ENCODE measurements at regions of chr21 and their contacts with region 1.

Region 1: GRCh38 chr21:44949779-44950198 is 10.0 kb downstream of the SLX9 start:
- DNase-seq: peak; percentile 97
- ATAC-seq: peak; percentile 94
- H3K4me3 Mint-ChIP-seq: no peak overlapping the region
- H3K27ac Mint-ChIP-seq: peak overlapping the region; percentile 45; the same call in 1 of the 2 replicates
- H3K4me1 Mint-ChIP-seq: 0 out of 2 replicates have a peak, but pooled peaks cover 2% of the 10 kb centered on the region
- H3K27me3 Mint-ChIP-seq: no peaks in the 10 kb centered on the region
- CTCF ChIP-seq: peak; percentile 88

Region 2: DNA sequence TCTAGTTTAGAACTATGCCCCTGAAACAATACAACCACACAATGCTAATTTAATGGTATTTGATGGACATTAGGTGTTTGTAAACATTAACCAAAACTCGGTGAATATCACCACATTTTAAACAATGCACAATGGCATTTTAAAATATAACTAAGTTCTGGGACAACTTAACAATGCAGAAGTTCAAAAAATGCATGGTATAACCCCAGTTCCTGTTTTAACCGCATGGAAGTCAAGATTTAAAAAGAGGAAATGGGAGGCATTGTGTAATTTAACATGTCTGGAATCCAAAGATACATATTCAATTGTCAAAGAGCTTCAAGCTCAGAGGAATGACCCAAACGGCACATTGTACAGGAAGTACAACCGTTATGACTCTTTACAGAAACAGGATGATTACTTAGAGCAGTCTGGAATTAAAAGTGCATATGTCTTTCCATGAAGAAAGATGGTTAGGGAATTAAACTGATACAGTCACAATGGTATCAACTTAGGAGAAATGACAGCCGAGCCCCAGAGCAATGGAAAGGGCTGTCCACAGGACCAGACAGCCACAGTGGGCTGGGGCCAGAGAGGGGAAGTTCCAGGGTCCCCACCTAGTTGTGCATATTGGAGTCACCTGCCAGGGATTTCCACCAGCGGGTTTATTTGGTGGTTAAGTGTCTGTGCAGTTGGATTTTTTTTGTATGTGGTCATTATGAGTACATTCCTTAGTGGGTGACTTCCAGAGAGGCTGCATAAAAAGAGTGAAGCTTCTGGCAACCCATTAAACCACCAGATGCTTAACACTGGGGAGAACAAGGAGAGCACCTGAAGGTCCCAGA is 68.8 kb before region 1 on chr21:
- CTCF ChIA-PET with region 1: no interaction called
- POLR2A ChIA-PET with region 1: no interaction called
- DNase-seq: no peak
- ATAC-seq: no peak
- H3K4me3 Mint-ChIP-seq: no peak overlapping the region
- H3K27ac Mint-ChIP-seq: no peak overlapping the region
- H3K4me1 Mint-ChIP-seq: peaks cover 5% of the 10 kb centered on the region
- H3K27me3 Mint-ChIP-seq: peaks cover 7% of the 10 kb centered on the region
- CTCF ChIP-seq: no peak

Region 3: DNA sequence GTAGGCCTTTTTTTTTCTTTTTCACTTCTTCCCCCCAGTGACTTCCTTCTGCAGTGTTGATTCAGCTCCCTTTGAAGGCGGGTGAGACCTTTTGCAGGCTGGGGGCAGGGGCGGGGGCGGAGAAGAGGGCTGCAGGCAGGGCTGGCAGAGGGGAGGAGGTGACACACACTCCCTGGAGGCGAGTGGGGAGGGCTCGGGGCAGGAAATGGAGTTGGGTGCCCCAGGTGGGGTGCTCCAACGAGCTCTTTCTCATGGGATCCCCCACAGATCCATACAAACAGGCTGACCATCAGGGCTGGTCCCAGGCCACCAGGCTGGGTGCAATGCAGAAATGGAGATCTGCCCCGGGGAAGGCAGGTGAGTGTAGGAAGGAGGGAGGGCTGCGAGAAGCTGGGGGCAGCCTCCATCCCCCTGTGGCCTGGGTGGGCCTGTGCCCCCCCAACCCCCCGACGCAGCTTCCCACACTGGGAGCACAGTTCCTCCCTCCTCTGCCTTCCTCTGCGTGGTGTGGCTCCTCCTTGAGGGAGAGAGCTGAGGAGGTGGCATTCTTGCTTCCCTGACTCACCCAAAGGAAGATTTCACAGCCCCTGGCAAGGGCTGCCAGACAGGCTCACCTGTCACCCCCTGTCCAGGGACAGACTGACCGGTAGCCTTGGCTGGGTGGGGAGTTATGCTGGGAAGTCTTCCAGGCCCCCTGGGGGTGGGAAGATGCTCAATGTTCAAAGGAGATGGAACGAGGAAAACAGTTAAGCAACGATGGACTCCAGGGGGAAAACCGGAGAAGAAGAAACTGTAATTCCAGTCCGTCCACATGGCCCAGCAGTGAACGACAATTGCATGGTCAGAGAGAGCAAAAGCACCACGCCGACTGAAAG is 22.0 kb before region 1 on chr21:
- CTCF ChIA-PET with region 1: interaction called, 11 read pairs
- POLR2A ChIA-PET with region 1: no interaction called
- DNase-seq: no peak
- ATAC-seq: peak; percentile 36
- H3K4me3 Mint-ChIP-seq: no peak overlapping the region
- H3K27ac Mint-ChIP-seq: no peak overlapping the region; the same call in 1 of the 2 replicates
- H3K4me1 Mint-ChIP-seq: peaks cover 41% of the 10 kb centered on the region
- H3K27me3 Mint-ChIP-seq: peaks cover 56% of the 10 kb centered on the region
- CTCF ChIP-seq: no peak

Region 4: GRCh38 chr21:44939532-44940115 is 10.2 kb before region 1 on chr21 and contains the start of gene SLX9:
- CTCF ChIA-PET with region 1: interaction called, 17 read pairs
- POLR2A ChIA-PET with region 1: no interaction called
- DNase-seq: peak; percentile 80
- ATAC-seq: peak; percentile 89
- H3K4me3 Mint-ChIP-seq: peak within 1 kb of the TSS; percentile 76
- H3K27ac Mint-ChIP-seq: peak within 1 kb of the TSS; percentile 70
- H3K4me1 Mint-ChIP-seq: peaks cover 23% of the 10 kb centered on the region
- H3K27me3 Mint-ChIP-seq: peaks cover 5% of the 10 kb centered on the region
- CTCF ChIP-seq: no peak
- total RNA-seq, gene SLX9: 72.8 to 81.0 TPM (median 77.2 TPM) in 3 replicates

Region 5: GRCh38 chr21:44975720-44976555 is 26.1 kb after region 1 on chr21:
- CTCF ChIA-PET with region 1: interaction called, 13 read pairs
- POLR2A ChIA-PET with region 1: no interaction called
- DNase-seq: no peak
- ATAC-seq: no peak
- H3K4me3 Mint-ChIP-seq: no peak overlapping the region
- H3K27ac Mint-ChIP-seq: no peak overlapping the region
- H3K4me1 Mint-ChIP-seq: peaks cover 5% of the 10 kb centered on the region; the same call in 1 of the 2 replicates
- H3K27me3 Mint-ChIP-seq: no peaks in the 10 kb centered on the region
- CTCF ChIP-seq: no peak

Region 6: GRCh38 chr21:45011911-45012660 is 62.3 kb after region 1 on chr21:
- CTCF ChIA-PET with region 1: interaction called, 12 read pairs
- POLR2A ChIA-PET with region 1: no interaction called
- DNase-seq: peak; percentile 62
- ATAC-seq: peak; percentile 85
- H3K4me3 Mint-ChIP-seq: no peak overlapping the region
- H3K27ac Mint-ChIP-seq: no peak overlapping the region
- H3K4me1 Mint-ChIP-seq: peaks cover 19% of the 10 kb centered on the region
- H3K27me3 Mint-ChIP-seq: peaks cover 24% of the 10 kb centered on the region
- CTCF ChIP-seq: no peak

Region 7: DNA sequence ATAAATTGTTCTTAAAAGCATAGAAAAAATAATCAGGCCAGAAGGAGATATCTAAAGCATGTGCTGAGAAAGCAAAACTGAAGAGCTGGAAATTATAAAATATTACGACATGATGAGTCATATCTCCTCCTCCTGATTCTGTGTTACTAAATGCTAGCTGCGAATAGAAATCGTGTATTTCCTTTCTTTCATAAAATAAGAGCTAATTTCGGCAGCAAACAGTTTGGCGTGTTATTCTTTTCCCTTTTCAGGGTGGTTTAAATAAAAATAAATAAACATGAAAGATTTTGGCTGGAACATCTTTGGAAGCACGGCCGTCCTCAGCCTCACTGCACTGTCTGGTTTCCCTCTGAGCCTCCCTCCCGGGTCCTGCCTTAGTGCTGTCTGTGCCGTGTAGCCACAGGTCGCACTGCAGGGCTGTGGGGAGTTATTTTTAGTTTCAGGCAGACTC is 180.6 kb after region 1 on chr21:
- CTCF ChIA-PET with region 1: interaction called, 39 read pairs
- POLR2A ChIA-PET with region 1: no interaction called
- DNase-seq: no peak
- ATAC-seq: no peak
- H3K4me3 Mint-ChIP-seq: no peak overlapping the region
- H3K27ac Mint-ChIP-seq: no peak overlapping the region
- H3K4me1 Mint-ChIP-seq: no peaks in the 10 kb centered on the region
- H3K27me3 Mint-ChIP-seq: no peaks in the 10 kb centered on the region
- CTCF ChIP-seq: no peak

Measured in WTC11 (cell line).